Ascending aorta (tissue), 2 donors: ENCODE measurements at regions of chr17 and their contacts with region 1.

Region 1: DNA sequence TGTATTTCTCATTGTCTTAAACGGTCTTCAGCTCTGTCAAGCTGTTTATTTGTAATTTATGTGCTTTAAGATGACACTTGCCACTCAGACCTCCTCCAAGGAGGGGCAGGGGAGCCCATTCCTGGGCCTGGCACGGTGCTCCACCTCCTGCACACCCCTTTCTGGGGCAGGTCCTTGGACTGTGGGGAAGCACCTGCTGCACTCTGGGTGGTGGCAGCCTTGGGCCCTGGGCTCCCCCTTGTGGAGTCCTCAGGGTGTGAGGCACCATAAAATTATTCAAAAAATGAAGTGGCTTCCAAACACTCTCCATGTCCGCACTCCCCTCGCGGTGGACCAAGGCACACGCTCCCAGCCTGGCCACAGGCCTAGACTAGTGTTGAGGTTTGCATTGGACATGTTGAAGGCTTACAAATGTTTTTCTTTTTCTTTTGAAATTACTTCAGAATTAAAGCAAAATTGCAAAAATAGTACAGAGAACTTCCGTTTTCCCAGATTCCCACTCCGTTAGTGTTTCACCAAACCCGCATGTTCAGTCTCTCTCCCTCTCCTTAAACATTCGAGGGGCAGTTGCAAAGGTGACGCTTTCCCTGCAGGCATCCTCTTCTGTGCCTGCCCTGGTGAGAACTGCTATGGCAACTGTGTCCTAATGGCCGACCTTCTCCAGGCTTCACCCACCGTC is 32.4 kb downstream of the FOXK2 start:
- DNase-seq: peak; percentile 54 to 91
- H3K4me3 ChIP-seq: no peak overlapping the region
- H3K27ac ChIP-seq: peak overlapping the region; percentile 43 to 71
- H3K4me1 ChIP-seq: peaks cover 10 to 40% of the 10 kb centered on the region in 2 donors
- H3K27me3 ChIP-seq: no peaks in the 10 kb centered on the region
- CTCF ChIP-seq: peak; percentile 86

Region 2: GRCh38 chr17:82145550-82146190 is 406.2 kb before region 1 on chr17:
- intact Hi-C with region 1: no loop called
- DNase-seq: no peak
- H3K4me3 ChIP-seq: no peak overlapping the region
- H3K27ac ChIP-seq: no peak overlapping the region
- H3K4me1 ChIP-seq: no peaks in the 10 kb centered on the region
- H3K27me3 ChIP-seq: no peaks in the 10 kb centered on the region
- CTCF ChIP-seq: no peak

Region 3: GRCh38 chr17:82351716-82352488 is 200.0 kb before region 1 on chr17:
- intact Hi-C with region 1: loop called (anchors 2 kb)
- DNase-seq: peak in 1 of 2 donors; percentile 92
- H3K4me3 ChIP-seq: no peak overlapping the region
- H3K27ac ChIP-seq: no peak overlapping the region
- H3K4me1 ChIP-seq: peaks cover 7 to 10% of the 10 kb centered on the region in 2 donors
- H3K27me3 ChIP-seq: no peaks in the 10 kb centered on the region
- CTCF ChIP-seq: peak in 2 of 3 experiments; percentile 94 to 96

Region 4: DNA sequence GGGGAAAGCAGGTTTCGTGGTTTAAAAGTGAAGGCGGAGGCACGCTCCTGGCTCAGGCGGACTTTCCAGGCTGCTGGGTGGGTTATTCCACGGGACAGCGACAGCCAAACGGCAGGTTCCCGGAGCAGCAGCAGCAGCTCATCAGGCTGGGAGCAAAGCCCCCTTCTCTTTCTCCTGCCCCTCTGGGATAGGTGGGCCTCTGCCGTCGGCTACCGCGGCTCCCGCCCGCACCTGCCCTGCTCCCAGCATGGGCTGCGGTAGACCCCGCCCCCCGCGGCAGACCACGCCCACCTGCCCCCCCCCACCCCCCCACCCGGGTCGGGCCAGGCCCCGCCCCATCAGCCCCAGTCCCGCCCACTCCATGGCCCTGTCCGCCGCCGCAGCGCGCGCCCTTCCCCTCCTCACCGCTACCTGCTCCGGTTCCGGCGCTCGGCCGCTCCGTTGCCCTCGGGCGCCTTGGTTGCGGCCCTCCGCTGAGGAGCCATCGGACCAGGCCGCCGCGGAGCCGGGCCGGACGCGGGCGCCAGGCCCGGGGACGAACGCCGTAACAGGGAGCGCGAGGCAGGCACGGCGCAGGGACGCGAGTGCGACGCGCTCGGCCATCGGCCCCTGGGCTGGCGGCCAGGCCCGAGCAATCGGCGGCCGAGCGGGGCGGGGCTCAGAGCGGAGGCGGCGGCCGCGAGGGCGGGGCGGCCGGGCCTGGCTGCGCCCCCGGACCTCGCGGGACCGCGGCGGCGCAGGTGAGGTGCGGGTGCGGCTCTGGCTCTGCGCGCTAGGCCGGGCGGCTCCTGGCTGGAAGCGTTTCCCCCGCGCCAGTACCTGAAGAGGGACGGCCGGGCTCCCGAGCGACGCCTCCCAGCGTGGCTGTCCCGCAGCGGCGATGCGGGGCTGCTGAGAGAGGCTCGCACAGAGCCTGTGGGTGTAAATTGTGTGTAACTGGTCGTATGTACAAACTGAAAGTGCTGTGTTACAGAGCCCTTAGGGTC is 133.6 kb before region 1 on chr17 and contains the starts of genes HEXD and OGFOD3:
- intact Hi-C with region 1: loop called (anchors 1 kb)
- DNase-seq: peak in 1 of 2 donors; percentile 89
- H3K4me3 ChIP-seq: peak within 1 kb of the TSS; percentile 79 to 96
- H3K27ac ChIP-seq: peak within 1 kb of the TSS; percentile 75 to 92
- H3K4me1 ChIP-seq: peaks cover 4 to 10% of the 10 kb centered on the region in 2 donors
- H3K27me3 ChIP-seq: no peaks in the 10 kb centered on the region
- CTCF ChIP-seq: peak in 1 of 3 experiments; percentile 32
- total RNA-seq, gene HEXD: 40.4 TPM
- total RNA-seq, gene OGFOD3: 36.6 TPM

Region 5: DNA sequence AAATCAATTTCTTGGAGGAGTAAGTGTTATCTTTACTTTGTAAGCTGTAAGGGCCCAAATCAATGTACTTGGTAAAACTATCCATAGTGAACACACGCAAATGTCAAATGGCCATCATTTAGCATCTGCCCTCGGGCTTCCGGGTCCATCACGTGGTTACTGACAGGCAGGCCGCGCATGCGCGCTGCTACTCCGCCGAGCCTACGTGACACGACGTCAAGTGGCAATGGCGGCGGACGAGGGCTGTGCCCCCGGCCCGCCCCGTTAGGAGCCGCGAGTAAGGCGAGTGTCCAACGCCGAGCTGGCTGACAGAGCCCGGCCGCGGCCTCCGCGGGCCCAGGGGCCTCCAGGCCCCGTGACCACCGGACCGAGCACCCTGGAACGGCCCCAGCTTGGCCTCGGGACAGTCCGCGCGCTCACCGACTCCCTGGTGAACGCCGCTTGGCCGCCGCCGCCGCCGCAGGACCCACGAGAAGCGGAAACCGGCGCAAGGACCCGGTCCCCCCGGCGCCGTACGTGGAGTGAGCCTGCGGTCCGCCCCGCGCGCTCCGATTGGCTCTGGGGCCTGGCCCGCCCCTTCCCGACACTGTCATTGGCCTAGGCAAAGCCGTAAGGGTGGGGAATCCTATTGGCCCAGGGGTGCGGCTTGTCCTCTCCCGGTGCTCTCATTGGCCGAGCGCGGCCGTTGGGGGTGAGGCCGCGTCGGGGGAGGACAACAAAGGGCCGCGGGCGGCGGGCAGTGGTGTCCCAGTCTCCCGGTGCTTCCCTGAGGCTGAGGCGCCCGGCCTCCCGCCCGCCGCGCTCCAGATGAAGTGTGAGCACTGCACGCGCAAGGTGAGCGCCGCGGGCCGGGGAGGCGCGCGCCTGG is 93.7 kb before region 1 on chr17 and contains the start of gene NARF:
- intact Hi-C with region 1: loop called (anchors 2 kb)
- DNase-seq: peak; percentile 92 to 99
- H3K4me3 ChIP-seq: peak within 1 kb of the TSS; percentile 77 to 86
- H3K27ac ChIP-seq: peak within 1 kb of the TSS; percentile 100
- H3K4me1 ChIP-seq: peaks cover 0 to 12% of the 10 kb centered on the region in 2 donors
- H3K27me3 ChIP-seq: no peaks in the 10 kb centered on the region
- CTCF ChIP-seq: no peak
- total RNA-seq, gene NARF: 38.3 TPM

Region 6: GRCh38 chr17:82494236-82495055 is 57.5 kb before region 1 on chr17:
- intact Hi-C with region 1: loop called (anchors 1 kb)
- DNase-seq: peak; percentile 84 to 96
- H3K4me3 ChIP-seq: no peak overlapping the region
- H3K27ac ChIP-seq: peak overlapping the region; percentile 90 to 91
- H3K4me1 ChIP-seq: peaks cover 6 to 28% of the 10 kb centered on the region in 2 donors
- H3K27me3 ChIP-seq: no peaks in the 10 kb centered on the region
- CTCF ChIP-seq: peak; percentile 81 to 95 (median 87)

Region 7: GRCh38 chr17:82518826-82519810 is 32.8 kb before region 1 on chr17 and contains the start of gene FOXK2:
- intact Hi-C with region 1: loop called (anchors 2 kb)
- DNase-seq: peak; percentile 80 to 95
- H3K4me3 ChIP-seq: peak within 1 kb of the TSS; percentile 81 to 84
- H3K27ac ChIP-seq: peak within 1 kb of the TSS; percentile 88 to 99
- H3K4me1 ChIP-seq: peaks cover 0 to 8% of the 10 kb centered on the region in 2 donors
- H3K27me3 ChIP-seq: no peaks in the 10 kb centered on the region
- CTCF ChIP-seq: no peak
- total RNA-seq, gene FOXK2: 131 TPM

Region 8: DNA sequence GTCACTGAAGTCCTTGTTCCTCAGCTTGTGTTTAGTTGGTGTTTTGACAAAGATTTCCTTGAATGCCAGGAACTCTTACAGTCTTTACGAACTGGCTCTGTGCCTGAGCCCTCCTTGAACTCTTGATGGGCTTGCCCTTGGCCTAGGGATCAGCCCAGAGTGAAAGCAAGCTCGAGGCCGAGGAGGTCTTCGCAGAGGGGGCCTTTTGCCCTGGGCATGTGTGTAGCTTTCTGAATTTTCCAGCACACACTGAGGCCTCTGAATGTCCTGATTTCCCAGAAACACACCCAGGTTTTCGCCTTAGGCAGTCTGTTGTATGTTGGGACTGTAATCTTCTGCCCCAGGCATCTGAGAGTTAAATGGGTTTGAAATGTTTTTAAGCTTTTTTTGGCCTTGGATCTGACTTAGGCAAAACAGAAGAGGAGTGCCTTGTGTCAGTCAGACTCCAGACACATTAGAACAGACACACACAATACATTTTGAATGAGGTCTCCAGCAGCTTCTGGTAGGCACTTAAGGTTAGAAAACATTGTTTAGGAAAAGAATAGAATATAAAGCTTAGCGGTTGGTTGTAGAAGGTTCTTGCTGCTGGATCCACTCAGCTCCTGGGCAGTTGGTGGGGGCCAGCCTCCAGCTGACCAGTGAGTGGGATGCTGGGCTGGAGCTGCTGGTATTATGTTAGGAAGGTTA is 15.3 kb before region 1 on chr17:
- intact Hi-C with region 1: loop called (anchors 2 kb)
- DNase-seq: peak in 1 of 2 donors; percentile 76
- H3K4me3 ChIP-seq: peak overlapping the region; percentile 37 to 43
- H3K27ac ChIP-seq: peak overlapping the region; percentile 93 to 95
- H3K4me1 ChIP-seq: peaks cover 4 to 57% of the 10 kb centered on the region in 2 donors
- H3K27me3 ChIP-seq: no peaks in the 10 kb centered on the region
- CTCF ChIP-seq: no peak

Region 9: GRCh38 chr17:82655038-82655479 is 103.1 kb after region 1 on chr17:
- intact Hi-C with region 1: no loop called
- DNase-seq: no peak
- H3K4me3 ChIP-seq: no peak overlapping the region
- H3K27ac ChIP-seq: no peak overlapping the region
- H3K4me1 ChIP-seq: no peaks in the 10 kb centered on the region
- H3K27me3 ChIP-seq: no peaks in the 10 kb centered on the region
- CTCF ChIP-seq: no peak

Region 10: DNA sequence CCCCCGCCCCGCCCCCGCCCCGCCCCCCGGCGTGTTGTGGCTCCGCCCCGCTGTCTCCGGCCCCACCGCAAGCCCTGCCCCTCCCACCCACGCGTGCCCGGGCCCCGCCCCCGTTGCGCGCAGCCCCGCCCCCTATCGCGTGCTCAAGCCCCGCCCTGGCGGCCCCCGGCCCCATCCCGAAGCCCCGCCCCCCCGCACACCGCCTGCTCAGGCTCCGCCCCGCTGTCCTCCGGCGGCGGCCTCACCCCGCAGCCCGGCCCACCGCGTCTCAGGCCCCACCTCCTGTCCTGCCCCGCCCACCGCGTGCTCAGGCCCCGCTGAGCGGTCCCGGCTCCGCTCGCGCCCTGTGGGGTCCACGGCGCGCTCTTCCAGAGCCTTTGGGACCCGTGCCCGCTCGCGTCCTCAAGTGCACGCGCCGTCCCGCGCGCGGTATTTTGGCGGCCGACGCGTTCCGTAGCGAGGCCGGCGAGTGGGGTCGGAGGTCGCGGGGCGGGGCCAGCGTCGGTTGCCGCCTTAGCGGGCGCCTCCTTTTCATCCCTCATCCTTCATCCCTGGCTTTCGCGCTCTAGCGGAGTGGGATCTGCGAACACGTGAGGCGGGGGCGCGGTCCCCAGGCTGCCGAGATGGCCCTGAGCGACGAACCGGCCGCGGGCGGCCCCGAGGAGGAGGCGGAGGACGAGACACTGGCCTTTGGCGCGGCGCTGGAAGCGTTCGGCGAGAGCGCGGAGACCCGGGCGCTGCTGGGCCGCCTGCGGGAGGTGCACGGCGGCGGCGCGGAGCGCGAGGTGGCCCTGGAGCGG is 199.9 kb after region 1 on chr17 and contains the start of gene TBCD:
- intact Hi-C with region 1: no loop called
- DNase-seq: peak; percentile 30 to 91
- H3K4me3 ChIP-seq: peak within 1 kb of the TSS; percentile 92 to 98
- H3K27ac ChIP-seq: peak within 1 kb of the TSS; percentile 81 to 91
- H3K4me1 ChIP-seq: peaks cover 7 to 18% of the 10 kb centered on the region in 2 donors
- H3K27me3 ChIP-seq: no peaks in the 10 kb centered on the region
- CTCF ChIP-seq: no peak
- total RNA-seq, gene TBCD: 156 TPM

Region 11: DNA sequence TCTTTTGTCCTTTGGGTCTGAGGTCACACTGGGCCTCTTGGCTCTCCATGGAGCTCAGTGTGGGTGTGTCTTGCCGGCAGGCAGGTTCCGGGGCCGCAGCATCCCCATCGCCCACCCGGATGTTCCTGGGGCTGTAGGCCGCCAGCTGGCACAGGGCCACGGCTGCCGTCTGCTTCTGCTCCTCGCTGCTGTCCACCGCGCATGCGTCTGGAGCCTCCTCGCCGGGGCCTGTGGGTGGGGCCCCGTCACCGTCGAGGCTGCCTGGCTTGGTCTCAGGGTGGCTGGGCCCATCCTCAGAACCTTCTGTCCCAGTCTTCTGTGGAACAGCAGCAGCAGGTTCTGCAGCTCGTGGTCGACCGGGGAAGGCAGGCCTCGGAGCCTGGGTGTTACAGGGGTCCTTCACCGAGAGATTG is 278.3 kb after region 1 on chr17:
- intact Hi-C with region 1: no loop called
- DNase-seq: no peak
- H3K4me3 ChIP-seq: no peak overlapping the region
- H3K27ac ChIP-seq: no peak overlapping the region
- H3K4me1 ChIP-seq: no peaks in the 10 kb centered on the region
- H3K27me3 ChIP-seq: no peaks in the 10 kb centered on the region
- CTCF ChIP-seq: no peak